ENCODE measurements at regions of chr6 and their contacts with region 1.

Region 1: GRCh38 chr6:111925296-111925695 is 52.0 kb upstream of the FYN start:
- DNase-seq: peak; percentile 36
- ATAC-seq: peak; percentile 75
- H3K4me3 Mint-ChIP-seq: no peak overlapping the region
- H3K27ac Mint-ChIP-seq: no peak overlapping the region
- H3K4me1 Mint-ChIP-seq: peaks cover 36% of the 10 kb centered on the region
- H3K27me3 Mint-ChIP-seq: no peaks in the 10 kb centered on the region

Region 2: GRCh38 chr6:111727802-111728201 is 197.5 kb before region 1 on chr6:
- CTCF ChIA-PET with region 1: no interaction called
- POLR2A ChIA-PET with region 1: no interaction called
- intact Hi-C with region 1: no loop called
- DNase-seq: no peak
- ATAC-seq: no peak
- H3K4me3 Mint-ChIP-seq: no peak overlapping the region
- H3K27ac Mint-ChIP-seq: peak overlapping the region; percentile 59
- H3K4me1 Mint-ChIP-seq: peaks cover 90% of the 10 kb centered on the region
- H3K27me3 Mint-ChIP-seq: no peaks in the 10 kb centered on the region

Region 3: DNA sequence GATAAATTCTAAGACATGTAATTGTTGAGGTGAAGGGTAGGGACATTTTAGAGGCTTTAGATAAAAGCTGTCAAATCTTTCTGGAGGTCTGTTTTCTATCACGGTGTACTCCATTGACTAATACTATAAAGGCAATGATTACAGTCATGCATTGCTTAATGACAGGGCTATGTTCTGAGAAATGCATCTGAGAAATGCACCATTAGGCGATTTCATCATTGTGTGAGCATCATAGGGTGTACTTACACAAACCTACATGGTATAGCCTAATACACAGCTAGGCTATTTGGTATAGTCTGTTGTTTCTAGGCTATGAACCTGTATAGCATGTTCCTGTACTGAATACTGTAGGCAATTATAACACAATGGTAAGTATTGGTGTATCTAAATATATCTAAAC is 19.2 kb after region 1 on chr6:
- CTCF ChIA-PET with region 1: no interaction called
- POLR2A ChIA-PET with region 1: no interaction called
- intact Hi-C with region 1: loop called in 1 of 2 experiments (anchors 2 kb)
- DNase-seq: no peak
- ATAC-seq: no peak
- H3K4me3 Mint-ChIP-seq: no peak overlapping the region
- H3K27ac Mint-ChIP-seq: no peak overlapping the region
- H3K4me1 Mint-ChIP-seq: no peaks in the 10 kb centered on the region
- H3K27me3 Mint-ChIP-seq: no peaks in the 10 kb centered on the region

Region 4: DNA sequence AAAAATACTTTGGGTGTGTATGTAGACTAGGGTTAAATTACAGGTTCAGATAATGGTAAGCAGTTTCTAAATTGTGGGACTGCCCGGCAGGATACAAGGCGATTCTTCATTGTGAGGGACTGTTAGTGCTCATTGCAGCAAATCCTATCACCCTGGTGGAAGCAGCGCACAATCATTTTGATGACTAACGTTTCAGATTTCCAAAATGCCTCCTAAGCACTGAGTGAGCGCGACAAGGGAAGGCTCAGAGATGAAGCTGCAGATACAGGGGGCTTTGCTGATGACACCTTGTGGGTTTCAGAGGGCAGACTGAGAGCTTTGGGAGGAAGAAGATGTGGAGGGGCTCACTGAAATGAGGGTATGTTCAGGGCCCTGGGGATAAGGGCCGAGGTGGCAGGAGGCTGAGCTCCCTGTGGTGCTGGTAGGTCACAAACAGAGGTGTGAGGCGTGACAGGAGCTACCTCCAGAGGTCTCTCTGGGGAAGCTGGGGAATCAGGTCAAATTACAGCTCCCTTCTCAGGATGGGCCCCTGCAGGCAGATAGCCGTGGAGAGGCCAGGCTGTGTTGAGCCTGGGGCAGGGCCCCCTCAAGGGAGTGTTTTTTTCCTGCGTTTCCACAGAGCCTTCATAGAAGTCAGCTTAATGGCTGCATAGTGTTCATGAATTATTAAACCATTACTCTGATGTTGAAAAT is 32.5 kb after region 1 on chr6:
- CTCF ChIA-PET with region 1: no interaction called
- POLR2A ChIA-PET with region 1: no interaction called
- intact Hi-C with region 1: no loop called
- DNase-seq: no peak
- ATAC-seq: no peak
- H3K4me3 Mint-ChIP-seq: no peak overlapping the region
- H3K27ac Mint-ChIP-seq: no peak overlapping the region
- H3K4me1 Mint-ChIP-seq: peaks cover 6% of the 10 kb centered on the region
- H3K27me3 Mint-ChIP-seq: no peaks in the 10 kb centered on the region

Region 5: DNA sequence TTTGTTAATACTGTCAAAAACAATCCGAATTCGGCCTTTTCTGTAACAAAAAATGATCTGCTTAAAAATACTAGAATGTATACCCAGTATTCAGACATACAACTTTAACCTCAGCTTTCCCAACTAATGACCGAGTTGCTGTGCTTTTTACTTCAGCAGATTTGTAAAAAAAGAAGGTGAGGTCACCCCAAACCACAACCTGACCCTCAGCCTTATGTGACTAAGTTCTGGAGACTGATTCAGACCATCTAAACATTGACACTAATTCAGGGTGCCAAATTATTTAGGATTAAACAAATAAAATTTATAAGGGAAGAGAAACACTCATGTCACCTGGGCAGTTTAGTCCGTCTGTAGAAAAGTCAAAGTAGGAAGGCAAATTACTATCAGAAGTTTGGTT is 136.3 kb after region 1 on chr6:
- CTCF ChIA-PET with region 1: no interaction called
- POLR2A ChIA-PET with region 1: no interaction called
- intact Hi-C with region 1: no loop called
- DNase-seq: no peak
- ATAC-seq: no peak
- H3K4me3 Mint-ChIP-seq: no peak overlapping the region
- H3K27ac Mint-ChIP-seq: no peak overlapping the region
- H3K4me1 Mint-ChIP-seq: no peaks in the 10 kb centered on the region
- H3K27me3 Mint-ChIP-seq: no peaks in the 10 kb centered on the region